ENCODE measurements at regions of chr17 and their contacts with region 1.

Region 1: DNA sequence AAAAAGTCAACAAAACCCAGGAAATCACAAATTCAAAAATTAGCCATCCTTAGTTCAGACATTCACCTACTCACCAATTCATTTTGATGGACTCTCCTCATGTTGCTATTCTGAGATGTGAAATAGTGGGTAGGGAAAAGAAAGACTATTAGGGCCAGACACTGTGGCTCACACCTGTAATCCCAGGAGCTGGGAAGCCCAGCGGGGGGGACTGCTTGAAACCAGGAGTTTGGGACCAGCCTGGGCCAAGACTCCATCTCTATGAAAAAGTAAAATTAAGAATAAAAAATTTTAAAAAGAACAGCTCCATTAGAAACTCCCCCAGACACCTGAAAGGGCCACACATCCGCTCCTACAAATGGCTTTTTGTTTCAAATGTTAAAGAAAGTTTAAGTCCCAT is 21.4 kb downstream of the UBE2O start:
- DNase-seq: no peak
- H3K4me3 ChIP-seq: no peak overlapping the region
- H3K27ac ChIP-seq: no peak overlapping the region
- H3K4me1 ChIP-seq: peaks cover 0 to 4% of the 10 kb centered on the region in 2 donors
- H3K27me3 ChIP-seq: no peaks in the 10 kb centered on the region
- CTCF ChIP-seq: no peak
- POLR2A ChIP-seq: no peak

Region 2: GRCh38 chr17:76414334-76415295 is 16.9 kb before region 1 on chr17:
- intact Hi-C with region 1: loop called in 1 of 2 experiments (anchors 2 kb)
- DNase-seq: peak; percentile 45 to 90 (median 67)
- H3K4me3 ChIP-seq: no peak overlapping the region
- H3K27ac ChIP-seq: peak overlapping the region in 1 of 5 donors; percentile 6
- H3K4me1 ChIP-seq: peaks cover 0 to 15% of the 10 kb centered on the region in 2 donors
- H3K27me3 ChIP-seq: no peaks in the 10 kb centered on the region
- CTCF ChIP-seq: no peak
- POLR2A ChIP-seq: no peak